Right cardiac atrium (tissue), 5 donors: ENCODE measurements at regions of chr11 and their contacts with region 1.

Region 1: GRCh38 chr11:30917859-30918478 is 331.8 kb upstream of the MPPED2 start:
- DNase-seq: no peak
- ATAC-seq: peak in 1 of 2 donors; percentile 64
- H3K4me3 ChIP-seq: no peak overlapping the region
- H3K27ac ChIP-seq: no peak overlapping the region
- H3K4me1 ChIP-seq: no peaks in the 10 kb centered on the region
- H3K27me3 ChIP-seq: no peaks in the 10 kb centered on the region

Region 2: DNA sequence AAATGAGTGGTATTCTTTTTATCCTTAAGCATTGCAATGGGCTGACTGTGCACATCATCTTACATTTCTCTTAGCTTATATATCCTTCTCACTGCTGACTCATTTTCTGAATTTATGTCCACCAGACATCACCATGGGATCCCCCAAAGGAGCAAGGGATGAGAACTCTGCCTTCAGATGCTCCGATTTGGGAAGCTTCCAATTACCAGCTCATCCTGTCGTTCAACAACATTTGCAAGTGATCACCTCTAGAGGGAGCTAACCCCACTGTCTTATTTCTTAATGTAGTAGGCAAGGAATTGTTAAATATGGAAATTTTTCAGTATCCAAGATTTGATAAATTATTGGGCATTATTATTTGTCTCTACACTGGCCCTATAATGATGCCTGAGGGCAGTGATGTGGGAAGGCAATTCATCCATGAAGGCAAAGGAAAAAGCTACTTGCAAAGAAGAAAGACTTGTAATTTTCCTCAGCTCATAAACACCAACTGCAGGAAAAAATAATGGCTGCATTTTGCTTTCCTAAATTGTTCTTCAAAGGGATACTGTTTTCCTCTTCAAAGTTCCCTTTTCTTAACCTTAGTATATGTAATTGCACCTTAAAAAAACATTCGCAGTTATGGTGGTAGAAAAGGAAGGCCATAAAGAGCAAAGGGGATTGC is 789.6 kb before region 1 on chr11:
- intact Hi-C with region 1: loop called in 1 of 4 experiments (anchors 10 kb)
- DNase-seq: no peak
- ATAC-seq: no peak
- H3K4me3 ChIP-seq: no peak overlapping the region
- H3K27ac ChIP-seq: no peak overlapping the region
- H3K4me1 ChIP-seq: no peaks in the 10 kb centered on the region
- H3K27me3 ChIP-seq: no peaks in the 10 kb centered on the region

Region 3: DNA sequence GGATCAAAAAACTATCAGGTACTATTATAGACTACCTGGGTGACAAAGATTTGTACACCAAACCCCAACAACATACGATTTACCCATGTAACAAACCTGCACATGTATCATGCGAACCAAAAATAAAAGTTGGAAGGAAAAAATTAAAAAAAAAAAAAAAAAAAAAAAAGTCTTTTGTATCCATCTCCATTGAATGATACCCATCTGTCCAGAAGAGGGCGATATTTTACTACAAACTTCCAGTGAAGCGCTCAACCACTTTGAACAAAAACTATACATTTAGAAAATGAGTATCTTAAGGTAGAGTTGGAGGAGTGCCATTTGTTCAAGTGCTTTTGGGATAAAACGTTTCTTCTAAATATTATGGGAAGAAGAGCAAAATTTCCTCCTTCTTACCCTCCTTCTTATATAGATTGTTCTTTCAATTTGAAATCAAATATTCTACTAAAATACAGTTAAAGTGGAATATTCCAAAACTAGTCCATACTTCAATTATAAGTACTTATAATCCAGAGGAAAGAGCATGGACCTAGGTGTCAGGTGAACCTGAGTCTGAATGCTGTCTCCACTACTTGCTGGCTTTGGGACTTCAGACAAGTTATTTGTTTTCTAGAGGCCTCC is 571.8 kb before region 1 on chr11:
- intact Hi-C with region 1: loop called (anchors 5 kb)
- DNase-seq: no peak
- ATAC-seq: no peak
- H3K4me3 ChIP-seq: no peak overlapping the region
- H3K27ac ChIP-seq: no peak overlapping the region
- H3K4me1 ChIP-seq: no peaks in the 10 kb centered on the region
- H3K27me3 ChIP-seq: no peaks in the 10 kb centered on the region

Region 4: GRCh38 chr11:30855383-30856006 is 62.5 kb before region 1 on chr11:
- intact Hi-C with region 1: loop called in 2 of 4 experiments (anchors 10 kb)
- DNase-seq: no peak
- ATAC-seq: no peak
- H3K4me3 ChIP-seq: no peak overlapping the region
- H3K27ac ChIP-seq: no peak overlapping the region
- H3K4me1 ChIP-seq: no peaks in the 10 kb centered on the region
- H3K27me3 ChIP-seq: no peaks in the 10 kb centered on the region